Esophagus muscularis mucosa (tissue), 4 donors: ENCODE measurements at regions of chr14 and their contacts with region 1.

Region 1: DNA sequence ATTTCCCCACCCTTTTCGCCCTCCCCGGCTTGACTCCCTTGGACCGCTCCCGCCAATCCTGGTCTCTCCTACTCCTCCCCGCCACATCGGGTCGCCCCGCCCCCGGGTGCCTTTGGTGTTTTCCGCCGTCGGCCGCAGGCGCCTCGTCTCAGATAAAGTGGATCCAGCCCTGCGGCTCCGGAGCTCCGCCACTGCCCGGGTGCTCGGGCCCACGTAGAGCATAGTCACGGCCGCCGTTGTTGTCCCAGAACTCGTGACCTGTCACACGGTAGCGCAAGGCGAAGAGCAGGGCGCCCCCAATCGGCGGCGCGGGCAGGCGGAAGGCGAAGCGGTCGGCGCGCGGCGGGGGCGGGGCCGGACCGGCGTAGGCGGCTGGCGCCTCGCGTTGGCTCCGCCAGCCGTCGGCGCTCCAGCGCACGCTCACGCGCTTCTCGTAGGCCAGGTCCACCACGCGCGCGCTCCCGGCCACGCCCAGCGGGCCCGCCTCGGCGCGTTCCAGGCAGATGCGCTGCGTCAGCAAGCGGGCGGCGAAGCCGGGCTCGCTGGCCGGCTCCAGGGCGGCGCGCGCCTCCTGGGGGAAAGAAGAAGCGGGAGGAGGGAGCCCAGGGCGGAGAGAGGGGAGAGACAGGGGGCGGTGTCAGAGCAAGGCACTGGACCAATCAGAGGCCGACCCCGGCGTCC is 1.2 kb downstream of the PPP1R3E start:
- DNase-seq: peak; percentile 99
- H3K4me3 ChIP-seq: peak overlapping the region; percentile 69 to 84 (median 82)
- H3K27ac ChIP-seq: peak overlapping the region; percentile 94 to 100 (median 99)
- H3K4me1 ChIP-seq: peaks cover 35 to 47% (median 43%) of the 10 kb centered on the region in 4 donors
- H3K27me3 ChIP-seq: no peaks in the 10 kb centered on the region
- CTCF ChIP-seq: peak; percentile 72 to 88 (median 79)
- EP300 ChIP-seq: no peak
- POLR2A ChIP-seq: peak; percentile 27

Region 2: DNA sequence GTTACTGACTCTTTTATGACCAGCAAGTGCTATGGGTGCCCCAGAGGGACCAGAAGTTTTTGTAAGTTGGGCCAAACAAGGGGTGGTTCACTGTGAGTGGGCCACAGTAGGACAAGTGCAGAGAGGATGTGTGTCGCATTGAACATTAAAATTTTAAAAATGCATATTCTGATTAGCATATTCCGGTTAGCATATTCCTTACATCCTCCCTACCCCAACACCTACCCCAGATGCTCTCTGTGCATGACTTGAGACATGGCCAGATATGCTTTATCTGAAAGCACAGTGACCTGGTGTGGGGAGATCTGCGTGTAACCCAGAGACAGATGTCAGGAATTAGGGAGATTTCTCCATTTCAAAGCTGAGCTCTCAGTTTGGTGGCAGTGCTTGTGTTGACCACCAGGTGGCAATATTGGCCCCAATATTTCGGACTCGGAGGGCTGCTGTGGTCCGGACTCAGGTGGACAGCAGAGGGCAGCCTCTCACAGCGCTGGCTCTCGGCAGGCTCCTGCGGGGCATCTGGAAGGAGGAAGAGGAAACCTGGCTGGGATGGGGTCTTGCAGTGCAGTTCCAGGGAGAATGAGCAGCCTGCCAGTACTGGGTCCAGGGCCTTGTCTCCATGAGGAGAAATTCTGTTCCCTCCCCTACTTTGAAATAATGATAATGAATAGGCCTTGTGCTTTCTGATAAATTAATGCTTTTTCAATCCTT is 180.7 kb before region 1 on chr14:
- intact Hi-C with region 1: loop called (anchors 10 kb)
- DNase-seq: peak; percentile 97
- H3K4me3 ChIP-seq: no peak overlapping the region
- H3K27ac ChIP-seq: peak overlapping the region in 1 of 4 donors; percentile 48
- H3K4me1 ChIP-seq: peaks cover 14 to 22% (median 20%) of the 10 kb centered on the region in 4 donors
- H3K27me3 ChIP-seq: peaks cover 0 to 25% (median 0%) of the 10 kb centered on the region in 4 donors
- CTCF ChIP-seq: peak; percentile 100
- EP300 ChIP-seq: no peak
- POLR2A ChIP-seq: no peak

Region 3: GRCh38 chr14:23259426-23259825 is 42.0 kb before region 1 on chr14:
- intact Hi-C with region 1: loop called (anchors 2 kb)
- DNase-seq: no peak
- H3K4me3 ChIP-seq: no peak overlapping the region
- H3K27ac ChIP-seq: no peak overlapping the region
- H3K4me1 ChIP-seq: peaks cover 0 to 13% (median 4%) of the 10 kb centered on the region in 4 donors
- H3K27me3 ChIP-seq: peaks cover 0 to 4% (median 0%) of the 10 kb centered on the region in 4 donors
- CTCF ChIP-seq: no peak
- EP300 ChIP-seq: no peak
- POLR2A ChIP-seq: no peak

Region 4: GRCh38 chr14:23275412-23275811 is 26.0 kb before region 1 on chr14:
- intact Hi-C with region 1: no loop called
- DNase-seq: no peak
- H3K4me3 ChIP-seq: no peak overlapping the region
- H3K27ac ChIP-seq: no peak overlapping the region
- H3K4me1 ChIP-seq: peaks cover 0 to 4% (median 0%) of the 10 kb centered on the region in 4 donors
- H3K27me3 ChIP-seq: no peaks in the 10 kb centered on the region
- CTCF ChIP-seq: no peak
- EP300 ChIP-seq: no peak
- POLR2A ChIP-seq: no peak

Region 5: DNA sequence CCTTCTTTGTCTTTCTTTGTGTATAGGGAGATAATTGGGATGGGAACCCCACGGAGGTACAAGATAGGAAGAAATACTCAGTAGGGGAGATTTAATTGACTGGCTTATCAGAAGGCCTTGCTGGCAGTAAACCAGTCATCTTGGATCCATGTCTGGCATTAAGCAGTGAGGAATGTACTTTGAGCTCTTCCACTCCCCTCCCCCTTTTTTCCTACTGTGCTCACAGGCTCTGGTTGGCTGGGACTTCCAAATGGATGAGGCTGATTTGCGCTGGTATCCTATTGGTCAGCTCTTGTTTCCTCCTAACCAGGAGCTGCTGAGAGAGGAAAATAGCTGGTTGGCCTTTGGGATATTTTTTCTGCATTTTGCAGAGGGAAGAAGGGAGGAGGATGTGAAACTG is 192.8 kb after region 1 on chr14:
- intact Hi-C with region 1: no loop called
- DNase-seq: no peak
- H3K4me3 ChIP-seq: no peak overlapping the region
- H3K27ac ChIP-seq: no peak overlapping the region
- H3K4me1 ChIP-seq: no peaks in the 10 kb centered on the region
- H3K27me3 ChIP-seq: no peaks in the 10 kb centered on the region
- CTCF ChIP-seq: no peak
- EP300 ChIP-seq: no peak
- POLR2A ChIP-seq: no peak

Region 6: DNA sequence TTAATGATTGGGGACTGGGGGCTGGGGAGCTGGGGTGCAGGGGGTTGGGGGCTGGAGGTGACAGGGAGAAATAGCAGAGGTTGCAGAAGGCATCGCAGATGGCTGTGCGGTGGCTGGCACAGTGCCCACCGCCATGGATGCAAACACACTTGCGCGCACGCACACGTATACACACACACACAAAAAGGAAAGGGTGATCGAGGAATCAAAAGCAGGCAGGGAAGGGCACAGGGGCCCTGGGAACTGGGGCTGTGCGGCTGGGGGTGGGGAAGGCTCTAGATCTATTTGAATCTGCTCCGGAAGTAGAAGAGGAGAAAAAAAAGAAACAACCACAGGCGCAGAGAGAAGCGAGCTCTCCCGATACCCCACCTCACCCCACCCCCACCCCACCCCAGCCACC is 210.7 kb after region 1 on chr14:
- intact Hi-C with region 1: no loop called
- DNase-seq: no peak
- H3K4me3 ChIP-seq: peak overlapping the region; percentile 28 to 37 (median 33)
- H3K27ac ChIP-seq: no peak overlapping the region
- H3K4me1 ChIP-seq: peaks cover 0 to 12% (median 3%) of the 10 kb centered on the region in 4 donors
- H3K27me3 ChIP-seq: no peaks in the 10 kb centered on the region
- CTCF ChIP-seq: no peak
- EP300 ChIP-seq: no peak
- POLR2A ChIP-seq: no peak

Region 7: DNA sequence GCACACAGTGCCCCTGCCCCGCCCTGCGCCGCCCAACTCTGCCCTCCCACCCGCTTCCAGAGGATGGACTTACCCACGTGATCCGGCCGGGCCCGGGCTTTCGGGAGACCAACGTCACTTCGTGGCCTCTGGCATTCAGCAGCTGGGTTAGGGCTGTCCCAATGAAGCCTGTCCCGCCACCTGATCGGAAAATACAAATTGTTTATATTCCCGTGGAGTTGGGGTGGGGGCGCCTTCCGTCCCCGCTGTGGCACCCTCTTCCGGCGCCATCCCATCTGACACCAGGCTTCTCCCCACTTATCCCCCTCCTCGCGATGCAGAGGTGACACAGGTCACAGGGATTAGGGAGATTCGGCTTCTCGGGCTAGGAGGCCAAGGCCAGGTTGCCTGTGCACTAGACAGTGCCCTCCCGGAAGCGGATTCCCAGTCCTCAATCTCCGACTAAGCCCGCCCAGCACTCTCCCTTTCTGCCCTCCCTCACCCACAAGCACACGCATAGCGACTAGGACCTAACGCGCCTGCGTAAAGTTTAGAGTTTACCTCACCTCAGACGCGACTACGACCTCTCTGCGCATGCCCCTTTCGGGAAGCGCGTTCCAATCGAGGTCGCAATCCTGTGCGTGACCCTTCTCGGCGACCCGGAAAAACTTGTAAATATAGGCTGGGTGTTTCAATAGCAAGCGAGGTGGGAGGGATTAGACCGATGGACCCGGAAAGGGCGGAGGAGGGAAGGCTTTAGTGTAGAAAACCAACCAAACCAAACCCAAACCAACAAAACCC is 1141.0 kb after region 1 on chr14 and contains the start of gene SDR39U1:
- intact Hi-C with region 1: loop called (anchors 10 kb)
- DNase-seq: peak; percentile 99
- H3K4me3 ChIP-seq: peak within 1 kb of the TSS; percentile 64 to 83 (median 70)
- H3K27ac ChIP-seq: peak within 1 kb of the TSS; percentile 90 to 100 (median 98)
- H3K4me1 ChIP-seq: peaks cover 39 to 46% (median 40%) of the 10 kb centered on the region in 4 donors
- H3K27me3 ChIP-seq: no peaks in the 10 kb centered on the region
- CTCF ChIP-seq: peak in 2 of 3 experiments; percentile 3 to 23
- EP300 ChIP-seq: no peak
- POLR2A ChIP-seq: peak; percentile 20
- total RNA-seq, gene SDR39U1: 23.9 to 48.6 (median 33.5) TPM